Activated CD4-positive, alpha-beta memory T cell treated with anti-CD3 and anti-CD28 coated beads for 36 hours (primary cell): ENCODE measurements at regions of chr11 and their contacts with region 1.

Region 1: DNA sequence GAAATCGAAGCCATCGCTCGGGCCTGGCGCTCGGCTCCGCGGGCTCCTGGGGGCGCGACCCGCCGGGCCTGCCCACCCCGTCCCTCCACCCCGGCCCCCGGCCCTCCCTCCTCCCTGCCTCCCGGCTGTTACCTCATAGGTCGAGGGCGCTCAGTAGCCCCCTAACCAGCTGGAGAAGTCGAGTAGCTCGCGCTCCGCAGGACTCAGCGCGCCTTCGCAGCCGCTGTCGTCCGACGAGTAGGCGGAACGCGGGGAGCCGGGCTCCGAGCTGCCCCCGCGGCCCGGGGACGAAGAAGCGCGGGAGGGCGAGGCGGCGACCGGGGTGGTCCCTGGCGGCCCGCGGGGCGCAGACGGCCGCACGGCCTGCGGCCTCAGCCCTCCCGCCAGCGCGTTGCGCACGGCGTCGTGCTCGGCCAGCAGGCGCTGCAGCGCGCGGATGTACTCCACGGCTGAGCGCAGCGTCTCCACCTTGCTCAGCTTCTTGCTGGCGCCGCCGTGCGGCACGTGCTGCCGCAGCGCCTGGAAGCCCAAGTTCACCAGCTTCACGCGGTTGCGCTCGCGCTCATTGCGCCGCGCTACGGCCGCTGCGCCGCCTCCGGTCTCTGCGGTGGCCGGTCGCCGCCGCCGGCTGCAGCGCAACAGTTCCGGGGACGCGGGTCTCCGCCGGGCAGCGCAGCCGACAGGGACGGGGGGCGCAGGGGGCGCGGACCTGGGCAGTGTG is 627 bp downstream of the ASCL2 start:
- DNase-seq: peak; percentile 65
- H3K4me3 Mint-ChIP-seq: peak overlapping the region; percentile 52
- H3K27ac Mint-ChIP-seq: no peak overlapping the region
- H3K4me1 Mint-ChIP-seq: peaks cover 36% of the 10 kb centered on the region
- H3K27me3 Mint-ChIP-seq: peaks cover 38% of the 10 kb centered on the region

Region 2: GRCh38 chr11:2142762-2143202 is 127.0 kb before region 1 on chr11:
- CTCF ChIA-PET with region 1: no interaction called
- POLR2A ChIA-PET with region 1: no interaction called
- intact Hi-C with region 1: loop called (anchors 5 kb)
- DNase-seq: peak; percentile 65
- H3K4me3 Mint-ChIP-seq: peak overlapping the region; percentile 53
- H3K27ac Mint-ChIP-seq: peak overlapping the region; percentile 32
- H3K4me1 Mint-ChIP-seq: peaks cover 33% of the 10 kb centered on the region
- H3K27me3 Mint-ChIP-seq: peaks cover 56% of the 10 kb centered on the region

Region 3: GRCh38 chr11:2211113-2211971 is 58.4 kb before region 1 on chr11:
- CTCF ChIA-PET with region 1: no interaction called
- POLR2A ChIA-PET with region 1: no interaction called
- intact Hi-C with region 1: loop called (anchors 5 kb)
- DNase-seq: no peak
- H3K4me3 Mint-ChIP-seq: no peak overlapping the region
- H3K27ac Mint-ChIP-seq: no peak overlapping the region
- H3K4me1 Mint-ChIP-seq: peaks cover 11% of the 10 kb centered on the region
- H3K27me3 Mint-ChIP-seq: no peaks in the 10 kb centered on the region

Region 4: DNA sequence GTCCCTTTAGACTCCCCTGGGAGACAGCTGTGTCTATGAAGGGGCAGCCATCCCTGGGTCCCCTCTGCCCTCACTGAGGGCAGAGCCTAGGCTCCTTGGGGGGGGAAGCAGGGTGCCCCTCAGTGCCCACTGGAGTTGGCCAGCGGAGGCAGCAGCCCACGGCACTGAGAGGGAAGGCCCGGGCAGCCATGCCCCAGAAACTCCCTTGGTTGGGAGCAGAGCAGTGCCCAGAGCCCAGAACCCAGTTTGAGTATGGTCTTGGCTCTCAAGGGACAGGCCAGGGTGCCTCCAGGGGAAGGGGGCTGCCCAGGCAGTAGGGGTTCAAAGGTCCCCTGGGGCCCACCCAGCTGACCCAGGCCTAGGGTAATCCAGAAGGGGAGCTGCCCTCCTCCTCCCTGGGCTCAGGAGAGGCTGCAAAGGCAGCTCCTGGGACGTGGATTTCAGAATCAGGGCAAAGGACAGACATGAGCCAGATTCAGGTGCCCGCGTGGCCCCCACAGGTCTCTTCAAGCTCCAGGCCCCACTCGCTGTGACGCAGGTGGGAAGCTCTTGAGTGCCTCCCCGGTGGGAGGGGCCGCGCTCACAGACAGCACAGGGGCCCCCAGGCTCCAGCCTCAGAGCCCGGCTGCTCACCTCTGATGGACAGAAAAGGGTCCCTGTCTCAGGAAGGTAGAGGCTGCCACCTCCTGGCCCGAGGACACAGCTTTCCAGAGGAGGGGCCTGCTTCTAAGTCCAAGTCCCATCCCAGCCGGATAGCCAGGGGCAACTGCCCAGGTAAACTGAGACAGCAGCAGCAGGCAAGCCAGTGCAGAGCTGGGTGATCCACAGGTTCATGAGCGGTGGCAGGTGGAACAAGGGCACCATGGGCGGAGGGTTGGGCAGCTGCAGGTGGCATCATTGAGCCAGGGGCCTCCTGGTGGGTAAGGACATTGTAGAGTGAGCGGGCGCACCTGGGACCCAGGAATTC is 29.3 kb after region 1 on chr11:
- CTCF ChIA-PET with region 1: interaction called, 8 read pairs
- POLR2A ChIA-PET with region 1: interaction called, 7 read pairs
- intact Hi-C with region 1: loop called (anchors 2 kb)
- DNase-seq: peak; percentile 43
- H3K4me3 Mint-ChIP-seq: no peak overlapping the region
- H3K27ac Mint-ChIP-seq: no peak overlapping the region
- H3K4me1 Mint-ChIP-seq: peaks cover 26% of the 10 kb centered on the region
- H3K27me3 Mint-ChIP-seq: no peaks in the 10 kb centered on the region

Region 5: GRCh38 chr11:2305140-2305840 is 35.5 kb after region 1 on chr11:
- CTCF ChIA-PET with region 1: interaction called, 17 read pairs
- POLR2A ChIA-PET with region 1: interaction called, 7 read pairs
- intact Hi-C with region 1: loop called (anchors 2 kb)
- DNase-seq: peak; percentile 88
- H3K4me3 Mint-ChIP-seq: no peak overlapping the region
- H3K27ac Mint-ChIP-seq: no peak overlapping the region
- H3K4me1 Mint-ChIP-seq: peaks cover 42% of the 10 kb centered on the region
- H3K27me3 Mint-ChIP-seq: no peaks in the 10 kb centered on the region